H1 (cell line): ENCODE measurements at regions of chr5 and their contacts with region 1.

Region 1: DNA sequence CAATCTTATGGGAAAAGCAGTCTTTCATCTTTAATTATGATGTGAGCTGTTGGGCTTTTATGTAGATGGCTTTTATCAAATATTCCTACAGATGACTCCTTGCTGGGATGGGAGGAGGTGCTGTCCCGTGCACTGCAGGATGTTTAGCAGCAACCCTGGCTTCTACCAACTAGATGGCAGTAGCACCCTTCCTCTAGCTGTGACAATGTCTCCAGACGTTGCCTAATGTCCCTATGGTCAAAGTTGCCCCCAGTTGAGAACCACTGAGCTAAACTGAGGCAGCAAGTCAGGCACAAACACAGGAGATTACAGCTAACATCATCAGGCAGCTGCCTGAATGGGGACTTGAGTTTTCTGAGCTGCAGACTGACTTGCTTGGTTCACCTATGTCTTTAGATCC is 401.9 kb upstream of the PDE4D start:
- DNase-seq: peak in 1 of 2 experiments; percentile 50
- H3K4me3 ChIP-seq: no peak overlapping the region
- H3K27ac ChIP-seq: no peak overlapping the region
- H3K4me1 ChIP-seq: no peaks in the 10 kb centered on the region
- H3K27me3 ChIP-seq: no peaks in the 10 kb centered on the region
- CTCF ChIP-seq: peak; percentile 76 to 85 (median 83)
- EP300 ChIP-seq: no peak
- POLR2A ChIP-seq: no peak
- RAD21 ChIP-seq: peak; percentile 93 to 96

Region 2: GRCh38 chr5:60382716-60383115 is 87.3 kb after region 1 on chr5:
- CTCF ChIA-PET with region 1: interaction called, 17 read pairs
- POLR2A ChIA-PET with region 1: no interaction called
- DNase-seq: no peak
- H3K4me3 ChIP-seq: no peak overlapping the region
- H3K27ac ChIP-seq: no peak overlapping the region
- H3K4me1 ChIP-seq: peaks cover 1 to 6% (median 3%) of the 10 kb centered on the region in 4 experiments; a peak in 2 of 7 replicates
- H3K27me3 ChIP-seq: no peaks in the 10 kb centered on the region; a peak in 1 of 7 replicates
- CTCF ChIP-seq: no peak; a peak in 1 of 4 replicates
- EP300 ChIP-seq: no peak
- POLR2A ChIP-seq: no peak
- RAD21 ChIP-seq: peak; percentile 51 to 60

Region 3: GRCh38 chr5:60649283-60649917 is 354.0 kb after region 1 on chr5:
- CTCF ChIA-PET with region 1: interaction called, 10 read pairs
- POLR2A ChIA-PET with region 1: no interaction called
- DNase-seq: no peak
- H3K4me3 ChIP-seq: no peak overlapping the region
- H3K27ac ChIP-seq: no peak overlapping the region
- H3K4me1 ChIP-seq: no peaks in the 10 kb centered on the region
- H3K27me3 ChIP-seq: no peaks in the 10 kb centered on the region
- CTCF ChIP-seq: peak in 2 of 3 experiments; percentile 56 to 65; a peak in 2 of 4 replicates
- EP300 ChIP-seq: no peak
- POLR2A ChIP-seq: no peak
- RAD21 ChIP-seq: peak; percentile 52 to 54